A673 (cell line): ENCODE measurements at regions of chr19 and their contacts with region 1.

Region 1: DNA sequence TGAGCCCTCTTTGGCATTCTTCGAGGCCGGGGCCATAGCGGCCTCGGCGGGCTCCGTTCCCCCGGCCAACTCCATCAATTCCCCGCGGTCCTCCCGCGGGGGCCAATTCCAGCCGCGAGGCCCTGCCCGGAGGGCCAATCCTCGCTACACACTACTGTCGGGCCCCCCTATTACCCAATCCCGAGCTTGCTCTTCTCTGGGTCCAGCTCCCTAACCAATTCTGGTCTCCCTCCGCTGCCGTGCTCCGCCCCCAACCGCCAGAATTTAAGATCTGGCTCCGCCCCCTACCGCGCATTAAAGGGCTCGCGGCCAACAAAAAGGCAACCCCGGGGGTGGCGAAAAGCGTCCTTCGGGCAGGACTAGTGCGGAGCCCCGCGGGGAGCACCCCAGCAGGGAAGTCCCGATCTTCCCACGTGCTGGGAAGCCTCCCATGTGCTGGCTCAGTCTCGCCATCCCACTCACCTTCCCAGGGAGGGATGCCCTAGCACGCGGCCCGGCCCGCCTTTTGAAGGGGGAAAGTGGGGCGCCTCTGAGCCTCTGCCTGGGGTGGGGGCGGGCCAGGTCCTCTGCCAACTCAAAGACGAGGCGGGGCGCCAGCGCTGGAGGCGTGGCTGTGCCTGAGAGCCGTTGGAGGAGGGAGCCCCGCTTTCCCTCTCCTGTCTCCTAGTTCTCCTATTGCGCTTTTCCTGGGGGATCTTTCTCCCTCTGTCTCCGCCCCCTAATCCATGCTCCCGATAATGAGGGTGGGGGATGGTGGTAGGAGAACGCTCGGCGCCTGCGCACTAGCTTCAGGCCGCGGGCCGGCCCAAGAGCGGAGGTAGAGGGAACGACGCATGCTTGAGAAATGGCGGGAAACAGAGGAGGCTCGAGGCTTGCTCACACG is 3.5 kb downstream of the LIPE start:
- DNase-seq: peak; percentile 93
- H3K4me3 ChIP-seq: peak overlapping the region; percentile 54
- H3K27ac ChIP-seq: no peak overlapping the region
- H3K4me1 ChIP-seq: peaks cover 17% of the 10 kb centered on the region
- H3K27me3 ChIP-seq: no peaks in the 10 kb centered on the region
- CTCF ChIP-seq: no peak

Region 2: DNA sequence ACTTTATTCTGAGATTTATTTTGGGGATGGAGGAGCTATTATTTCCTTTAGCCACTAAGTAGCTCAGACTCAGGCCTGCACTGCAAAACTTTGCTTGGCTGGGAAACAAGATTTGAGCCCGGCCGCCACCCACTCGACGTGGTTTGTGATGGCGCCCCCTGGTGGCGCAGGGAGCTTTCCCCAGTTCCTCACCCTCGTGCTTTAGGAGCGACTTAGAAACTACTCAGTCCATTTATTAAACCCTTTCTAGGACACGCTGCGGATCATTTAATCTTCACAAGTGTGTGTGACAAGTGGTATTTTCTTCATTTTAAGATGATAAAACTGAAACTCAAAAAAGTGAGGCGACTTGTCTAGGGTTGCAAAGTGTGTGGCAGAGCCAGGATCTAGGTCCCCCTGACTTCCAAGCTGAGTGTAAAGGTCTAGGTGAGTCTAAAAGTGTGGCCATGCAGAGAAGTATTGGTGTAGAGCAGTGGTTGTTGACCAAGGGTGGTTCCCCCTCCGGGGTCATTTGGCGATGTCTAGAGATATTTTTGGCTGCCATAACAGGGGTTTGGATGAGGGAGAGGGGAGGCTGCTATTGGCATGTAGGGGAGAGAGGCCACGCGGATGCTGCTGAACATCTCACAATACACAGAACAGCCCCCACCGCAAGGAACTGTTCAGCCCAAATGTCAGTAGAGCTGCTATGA is 16.8 kb after region 1 on chr19:
- CTCF ChIA-PET with region 1: interaction called, 10 read pairs
- POLR2A ChIA-PET with region 1: no interaction called
- intact Hi-C with region 1: no loop called
- DNase-seq: peak; percentile 87
- H3K4me3 ChIP-seq: no peak overlapping the region
- H3K27ac ChIP-seq: no peak overlapping the region
- H3K4me1 ChIP-seq: no peaks in the 10 kb centered on the region
- H3K27me3 ChIP-seq: no peaks in the 10 kb centered on the region
- CTCF ChIP-seq: peak; percentile 98